Dorsolateral prefrontal cortex (tissue), 120 donors: ENCODE measurements at regions of chr15 and their contacts with region 1.

Region 1: GRCh38 chr15:36501063-36501678 is 78.3 kb upstream of the CDIN1 start:
- DNase-seq: peak in 2 of 10 donors; percentile 19 to 42
- H3K4me3 ChIP-seq: peak overlapping the region in 20 of 59 donors; percentile 2 to 45 (median 16)
- H3K27ac ChIP-seq: peak overlapping the region in 30 of 59 donors; percentile 1 to 74 (median 47)
- H3K27me3 ChIP-seq: peaks cover 0 to 4% (median 0%) of the 10 kb centered on the region in 45 donors
- CTCF ChIP-seq: peak; percentile 64 to 95 (median 83)

Region 2: DNA sequence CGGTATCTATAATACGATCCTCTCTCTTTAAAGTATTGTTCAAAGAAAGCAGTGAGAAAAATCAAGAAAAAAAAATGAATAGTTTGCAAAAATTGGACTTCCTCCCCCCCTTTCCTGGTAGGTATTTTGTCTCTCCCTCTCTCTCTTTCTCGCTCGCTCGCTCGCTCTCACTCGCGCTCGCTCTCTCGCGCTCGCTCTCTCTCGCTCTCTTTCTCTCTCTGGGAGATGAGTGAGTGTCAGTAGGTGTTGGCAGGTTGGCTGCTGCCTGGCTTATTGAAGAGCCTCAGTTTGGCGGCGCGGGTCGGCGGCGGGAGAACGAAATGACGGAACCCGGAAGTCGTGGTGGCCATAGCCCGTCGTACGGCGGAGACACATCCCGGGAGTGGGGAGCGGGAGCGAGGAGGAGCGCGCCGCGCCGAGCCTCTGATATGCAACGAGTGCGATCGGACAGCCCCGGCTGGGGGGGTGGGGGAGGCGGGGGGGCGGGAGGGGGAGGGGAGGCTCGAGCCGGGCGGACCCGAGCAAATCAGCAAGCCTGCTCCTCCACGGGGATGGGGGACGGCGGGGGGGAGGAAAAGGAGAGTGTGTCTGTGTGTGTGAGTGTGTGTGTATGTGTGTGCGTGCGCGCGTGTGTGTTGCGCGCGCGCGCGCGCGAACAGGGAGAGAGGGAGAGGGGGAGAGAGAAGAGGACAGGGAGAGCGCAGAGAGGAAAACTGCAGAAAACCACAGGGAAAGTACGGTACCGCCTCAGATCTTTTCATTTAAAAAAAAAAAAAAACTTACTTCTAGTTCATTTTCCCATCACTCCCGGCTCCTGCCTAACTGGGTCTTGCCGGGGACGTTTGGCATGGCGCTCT is 599.2 kb after region 1 on chr15 and contains the start of gene MEIS2:
- intact Hi-C with region 1: loop called (anchors 10 kb)
- DNase-seq: peak; percentile 80 to 91 (median 89)
- H3K4me3 ChIP-seq: peak within 1 kb of the TSS; percentile 52 to 87 (median 74)
- H3K27ac ChIP-seq: peak within 1 kb of the TSS; percentile 78 to 99 (median 95)
- H3K27me3 ChIP-seq: peaks cover 0 to 75% (median 32%) of the 10 kb centered on the region in 45 donors
- CTCF ChIP-seq: peak in 1 of 56 donors; percentile 3
- total RNA-seq, gene MEIS2: 23.7 to 65.2 (median 44.8) TPM

Region 3: DNA sequence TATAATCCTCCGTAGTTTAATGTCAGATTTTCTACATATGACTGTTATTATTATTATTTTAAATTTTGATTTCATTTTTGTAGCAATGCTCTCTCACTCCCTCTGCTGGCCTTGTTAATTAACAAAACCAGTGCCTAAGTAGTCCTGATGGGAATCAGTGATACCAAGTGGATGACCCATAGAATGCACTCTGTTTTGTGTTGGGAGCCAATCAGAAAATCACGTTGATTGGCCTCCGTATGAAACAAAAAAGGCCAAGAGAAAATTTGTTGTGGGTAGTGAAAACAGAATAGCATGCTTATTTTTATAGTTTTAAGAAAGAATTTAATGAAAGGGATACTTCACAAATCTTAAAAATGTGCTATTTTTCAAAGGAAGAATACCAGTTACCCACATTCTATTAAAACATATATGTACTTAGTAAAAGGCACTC is 633.5 kb after region 1 on chr15:
- intact Hi-C with region 1: loop called in 1 of 2 experiments (anchors 10 kb)
- DNase-seq: no peak
- H3K4me3 ChIP-seq: no peak overlapping the region
- H3K27ac ChIP-seq: no peak overlapping the region
- H3K27me3 ChIP-seq: peaks cover 0 to 5% (median 0%) of the 10 kb centered on the region in 45 donors
- CTCF ChIP-seq: peak; percentile 56 to 85 (median 74)